Activated CD4-positive, alpha-beta T cell treated with anti-CD3 and anti-CD28 coated beads for 36 hours (primary cell): ENCODE measurements at regions of chr1 and their contacts with region 1.

Region 1: GRCh38 chr1:228212966-228213844 is 5.4 kb downstream of the OBSCN start:
- DNase-seq: peak; percentile 96
- ATAC-seq: peak; percentile 94
- H3K4me3 Mint-ChIP-seq: peak overlapping the region; percentile 78
- H3K27ac Mint-ChIP-seq: peak overlapping the region; percentile 75
- H3K4me1 Mint-ChIP-seq: no peaks in the 10 kb centered on the region
- H3K27me3 Mint-ChIP-seq: no peaks in the 10 kb centered on the region

Region 2: GRCh38 chr1:227734856-227735538 is 478.2 kb before region 1 on chr1 and contains the starts of genes JMJD4 and SNAP47:
- CTCF ChIA-PET with region 1: no interaction called
- POLR2A ChIA-PET with region 1: no interaction called
- intact Hi-C with region 1: loop called in 1 of 2 experiments (anchors 1 kb)
- DNase-seq: peak; percentile 95
- ATAC-seq: peak; percentile 94
- H3K4me3 Mint-ChIP-seq: peak within 1 kb of the TSS; percentile 89
- H3K27ac Mint-ChIP-seq: peak within 1 kb of the TSS; percentile 86
- H3K4me1 Mint-ChIP-seq: peaks cover 25% of the 10 kb centered on the region
- H3K27me3 Mint-ChIP-seq: no peaks in the 10 kb centered on the region
- total RNA-seq, gene JMJD4: 14.4 to 18.1 TPM
- total RNA-seq, gene SNAP47: 30.3 to 31.2 TPM

Region 3: DNA sequence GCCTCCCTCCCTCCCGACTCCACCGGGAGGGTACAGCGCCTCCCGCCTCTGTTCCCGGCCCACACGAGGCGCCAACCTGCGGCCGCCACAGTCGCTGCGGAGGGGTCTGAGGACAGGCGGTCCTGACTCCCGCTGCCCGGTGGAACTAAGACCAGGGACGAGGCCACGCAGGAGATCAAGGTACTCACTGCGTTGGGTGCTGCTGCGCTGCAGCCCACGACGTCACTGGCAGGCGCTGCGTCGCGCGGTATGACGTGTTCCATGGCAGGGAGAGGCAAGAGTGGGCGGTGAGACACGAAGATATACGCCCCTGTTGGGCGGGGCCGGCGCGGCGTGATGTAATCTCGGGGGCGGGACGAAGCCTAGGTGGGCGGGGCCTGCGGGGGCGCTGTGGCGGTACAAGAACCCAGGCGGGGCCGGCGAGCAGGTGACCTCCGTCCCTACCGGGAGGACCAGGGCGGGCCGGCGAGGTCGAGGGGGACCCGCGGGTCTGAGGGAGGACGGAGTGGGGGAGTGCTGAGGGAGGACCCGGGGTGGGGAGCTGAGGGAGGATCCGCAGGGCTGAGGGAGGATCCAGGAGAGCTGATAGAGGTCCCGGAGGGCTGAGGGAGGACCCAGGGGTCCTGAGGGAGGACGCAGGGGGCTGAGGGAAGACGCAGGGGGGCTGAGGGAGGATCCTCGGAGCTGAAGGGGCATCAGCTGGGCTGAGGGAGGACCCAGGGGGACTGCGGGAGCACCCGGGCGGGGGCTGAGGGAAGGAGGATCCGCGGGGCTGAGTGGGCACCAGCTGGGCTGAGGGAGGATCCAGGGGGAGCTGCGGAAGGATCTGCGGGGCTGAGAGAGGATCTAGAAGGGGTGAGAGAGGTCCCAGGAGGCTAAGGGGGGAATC is 103.9 kb before region 1 on chr1 and contains the start of gene MRPL55:
- CTCF ChIA-PET with region 1: no interaction called
- POLR2A ChIA-PET with region 1: no interaction called
- intact Hi-C with region 1: loop called in 1 of 2 experiments (anchors 1 kb)
- DNase-seq: peak; percentile 99
- ATAC-seq: peak; percentile 92
- H3K4me3 Mint-ChIP-seq: peak within 1 kb of the TSS; percentile 90
- H3K27ac Mint-ChIP-seq: peak within 1 kb of the TSS; percentile 92
- H3K4me1 Mint-ChIP-seq: peaks cover 21% of the 10 kb centered on the region
- H3K27me3 Mint-ChIP-seq: no peaks in the 10 kb centered on the region
- total RNA-seq, gene MRPL55: 51.0 to 57.7 TPM

Region 4: DNA sequence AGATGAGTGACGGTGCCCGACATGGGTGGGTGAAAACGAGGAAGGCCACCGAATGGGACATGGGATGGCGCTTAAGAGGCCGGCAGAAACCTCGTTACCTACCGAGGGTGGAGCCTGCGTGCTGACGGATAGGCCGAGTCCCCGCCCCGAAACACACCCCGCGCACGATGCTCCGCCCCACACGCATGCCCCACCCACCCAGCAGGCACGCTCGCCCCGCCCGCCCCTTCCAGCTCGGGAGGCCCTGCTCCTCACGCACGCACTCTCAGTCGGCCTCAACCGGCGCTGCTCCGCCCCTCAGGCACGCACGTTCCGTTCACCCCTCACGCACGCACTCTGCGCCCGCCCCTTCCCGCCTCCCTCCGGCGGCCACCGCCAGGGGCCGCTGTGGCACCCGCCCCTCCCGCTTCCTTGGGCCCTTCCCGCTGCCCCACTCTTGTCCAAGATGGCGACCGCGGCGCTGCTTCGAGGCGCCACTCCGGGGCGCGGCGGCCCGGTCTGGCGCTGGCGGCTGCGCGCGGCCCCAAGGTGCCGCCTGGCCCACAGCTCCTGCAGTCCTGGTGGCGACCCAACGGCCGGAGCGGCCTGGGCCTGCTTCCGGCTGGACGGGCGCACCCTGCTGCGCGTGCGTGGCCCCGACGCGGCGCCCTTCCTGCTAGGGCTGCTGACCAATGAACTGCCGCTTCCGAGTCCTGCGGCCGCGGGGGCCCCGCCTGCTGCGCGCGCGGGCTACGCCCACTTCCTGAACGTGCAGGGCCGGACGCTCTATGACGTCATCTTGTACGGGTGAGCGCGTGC is 47.6 kb before region 1 on chr1 and contains the start of gene IBA57:
- CTCF ChIA-PET with region 1: interaction called, 5 read pairs
- POLR2A ChIA-PET with region 1: no interaction called
- intact Hi-C with region 1: loop called in 1 of 2 experiments (anchors 1 kb)
- DNase-seq: peak; percentile 100
- ATAC-seq: peak; percentile 89
- H3K4me3 Mint-ChIP-seq: peak within 1 kb of the TSS; percentile 80
- H3K27ac Mint-ChIP-seq: peak within 1 kb of the TSS; percentile 87
- H3K4me1 Mint-ChIP-seq: peaks cover 35% of the 10 kb centered on the region
- H3K27me3 Mint-ChIP-seq: no peaks in the 10 kb centered on the region
- total RNA-seq, gene IBA57: 6.0 to 8.3 TPM

Region 5: DNA sequence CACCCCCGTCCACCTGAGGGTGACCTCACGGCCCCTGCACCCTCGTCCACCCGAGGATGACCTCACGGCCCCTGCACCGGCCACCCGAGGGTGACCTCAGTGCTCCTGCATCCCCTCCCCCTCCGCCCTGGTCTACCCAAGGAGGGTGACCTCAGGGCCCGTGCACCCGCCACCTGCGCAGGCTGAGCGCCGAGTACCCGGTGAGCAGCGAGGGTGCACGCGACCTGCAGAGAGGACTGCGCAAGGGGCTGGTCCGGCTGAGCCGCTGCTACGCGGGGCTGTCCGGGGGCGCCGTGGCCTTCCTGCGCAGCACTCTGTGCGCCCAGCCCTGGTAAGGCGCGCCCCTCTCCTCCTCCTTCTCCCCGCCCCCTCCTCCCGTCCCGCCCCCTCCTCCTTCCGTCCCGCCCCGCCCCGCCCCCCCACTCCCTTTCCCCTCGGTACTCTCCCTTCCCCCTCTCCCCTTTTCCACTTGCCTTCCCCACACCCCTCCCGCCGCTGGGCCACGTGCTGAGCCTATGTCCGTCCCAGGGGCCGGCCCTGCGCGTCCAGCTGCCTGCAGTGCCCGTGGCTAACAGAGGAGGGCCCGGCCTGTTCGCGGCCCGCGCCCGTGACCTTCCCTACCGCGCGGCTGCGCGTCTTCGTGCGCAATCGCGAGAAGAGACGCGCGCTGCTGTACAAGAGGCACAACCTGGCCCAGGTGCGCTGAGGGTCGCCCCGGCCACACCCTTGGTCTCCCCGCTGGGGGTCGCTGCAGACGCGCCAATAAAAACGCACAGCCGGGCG is 165.1 kb after region 1 on chr1:
- CTCF ChIA-PET with region 1: no interaction called
- POLR2A ChIA-PET with region 1: no interaction called
- intact Hi-C with region 1: loop called in 1 of 2 experiments (anchors 1 kb)
- DNase-seq: peak; percentile 84
- ATAC-seq: peak; percentile 77
- H3K4me3 Mint-ChIP-seq: peak overlapping the region; percentile 73
- H3K27ac Mint-ChIP-seq: no peak overlapping the region
- H3K4me1 Mint-ChIP-seq: peaks cover 8% of the 10 kb centered on the region
- H3K27me3 Mint-ChIP-seq: peaks cover 10% of the 10 kb centered on the region

Region 6: GRCh38 chr1:228464487-228464983 is 251.3 kb after region 1 on chr1:
- CTCF ChIA-PET with region 1: no interaction called
- POLR2A ChIA-PET with region 1: interaction called, 3 read pairs
- intact Hi-C with region 1: loop called in 1 of 2 experiments (anchors 2 kb)
- DNase-seq: peak; percentile 95
- ATAC-seq: peak; percentile 83
- H3K4me3 Mint-ChIP-seq: peak overlapping the region; percentile 84
- H3K27ac Mint-ChIP-seq: peak overlapping the region; percentile 92
- H3K4me1 Mint-ChIP-seq: peaks cover 50% of the 10 kb centered on the region
- H3K27me3 Mint-ChIP-seq: peaks cover 2% of the 10 kb centered on the region

Region 7: GRCh38 chr1:228544021-228544850 is 331.0 kb after region 1 on chr1:
- CTCF ChIA-PET with region 1: no interaction called
- POLR2A ChIA-PET with region 1: no interaction called
- intact Hi-C with region 1: no loop called
- DNase-seq: no peak
- ATAC-seq: no peak
- H3K4me3 Mint-ChIP-seq: no peak overlapping the region
- H3K27ac Mint-ChIP-seq: no peak overlapping the region
- H3K4me1 Mint-ChIP-seq: no peaks in the 10 kb centered on the region
- H3K27me3 Mint-ChIP-seq: peaks cover 1% of the 10 kb centered on the region